ENCODE measurements at regions of chr5 and their contacts with region 1.

Region 1: DNA sequence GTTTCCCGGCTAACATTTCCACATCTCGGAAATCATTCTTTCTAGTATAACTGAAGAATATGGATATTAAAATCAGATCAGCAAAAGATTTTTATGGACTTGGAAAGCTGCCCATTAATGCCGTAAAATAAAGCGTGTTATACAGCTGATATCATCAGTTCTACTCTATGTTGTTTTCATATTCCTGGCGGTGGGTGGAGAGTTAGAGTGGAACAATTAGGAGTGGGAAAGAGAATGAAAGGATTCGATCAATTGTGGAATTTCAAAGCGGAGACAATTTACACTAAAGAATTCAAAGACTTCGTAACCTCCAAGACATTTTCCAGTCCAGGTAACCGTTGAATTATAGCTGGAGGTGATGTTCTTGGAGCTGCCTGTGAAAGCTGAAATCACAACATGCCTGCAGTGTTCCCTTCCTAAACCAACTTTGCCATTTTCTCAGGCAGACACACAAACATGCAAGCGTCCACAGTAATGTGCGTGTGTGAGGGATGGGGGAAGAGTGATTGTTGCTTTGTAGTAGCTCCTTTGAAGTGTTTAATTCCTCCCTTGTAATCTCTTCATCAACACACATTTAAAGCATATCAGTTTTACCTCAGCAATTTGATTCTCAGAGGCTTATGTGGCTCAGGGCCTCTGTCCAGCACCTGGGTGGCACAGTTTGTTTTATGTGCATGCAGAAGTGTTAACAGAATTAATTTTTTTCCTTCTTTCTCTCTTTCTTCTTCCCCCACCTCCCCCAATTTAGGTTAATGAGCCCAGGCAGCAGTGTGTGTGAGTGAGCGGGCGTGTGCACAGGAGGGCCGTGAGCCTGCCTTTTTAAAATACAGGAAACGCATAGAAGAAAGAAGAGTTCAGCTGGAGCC is 544.1 kb downstream of the RAB3C start:
- DNase-seq: peak; percentile 41
- H3K4me3 ChIP-seq: peak overlapping the region in 1 of 3 experiments; percentile 2
- H3K27ac ChIP-seq: peak overlapping the region; percentile 7
- H3K4me1 ChIP-seq: peaks cover 13% of the 10 kb centered on the region
- H3K27me3 ChIP-seq: peaks cover 0 to 5% of the 10 kb centered on the region in 2 experiments
- CTCF ChIP-seq: no peak
- POLR2A ChIP-seq: no peak

Region 2: DNA sequence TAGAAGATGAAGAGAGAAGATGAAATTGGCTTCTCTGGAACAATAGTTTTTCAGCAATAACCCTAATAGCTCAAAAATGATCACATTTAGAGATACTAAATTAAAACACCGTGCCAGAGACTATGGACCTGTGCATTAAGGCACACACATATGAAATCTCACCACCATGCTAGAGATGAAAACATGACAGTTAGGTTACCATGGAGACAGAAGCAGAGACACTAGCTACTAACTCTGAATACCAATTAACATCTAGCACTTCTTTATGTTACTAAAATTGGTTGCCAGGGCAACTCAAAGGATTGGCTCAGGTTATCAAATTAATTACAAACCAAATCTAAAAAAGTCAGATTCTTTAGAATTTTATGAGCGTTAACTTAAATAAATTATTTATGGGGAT is 1004.8 kb before region 1 on chr5:
- CTCF ChIA-PET with region 1: no interaction called
- POLR2A ChIA-PET with region 1: no interaction called
- dilution Hi-C with region 1: no loop called
- intact Hi-C with region 1: no loop called
- DNase-seq: no peak
- H3K4me3 ChIP-seq: no peak overlapping the region
- H3K27ac ChIP-seq: no peak overlapping the region
- H3K4me1 ChIP-seq: no peaks in the 10 kb centered on the region
- H3K27me3 ChIP-seq: no peaks in the 10 kb centered on the region
- CTCF ChIP-seq: no peak
- POLR2A ChIP-seq: no peak

Region 3: GRCh38 chr5:58666598-58667581 is 460.1 kb before region 1 on chr5:
- CTCF ChIA-PET with region 1: no interaction called
- POLR2A ChIA-PET with region 1: no interaction called
- dilution Hi-C with region 1: no loop called
- intact Hi-C with region 1: no loop called
- DNase-seq: peak; percentile 95
- H3K4me3 ChIP-seq: no peak overlapping the region
- H3K27ac ChIP-seq: peak overlapping the region; percentile 90
- H3K4me1 ChIP-seq: peaks cover 49% of the 10 kb centered on the region
- H3K27me3 ChIP-seq: no peaks in the 10 kb centered on the region
- CTCF ChIP-seq: no peak
- POLR2A ChIP-seq: peak; percentile 68

Region 4: DNA sequence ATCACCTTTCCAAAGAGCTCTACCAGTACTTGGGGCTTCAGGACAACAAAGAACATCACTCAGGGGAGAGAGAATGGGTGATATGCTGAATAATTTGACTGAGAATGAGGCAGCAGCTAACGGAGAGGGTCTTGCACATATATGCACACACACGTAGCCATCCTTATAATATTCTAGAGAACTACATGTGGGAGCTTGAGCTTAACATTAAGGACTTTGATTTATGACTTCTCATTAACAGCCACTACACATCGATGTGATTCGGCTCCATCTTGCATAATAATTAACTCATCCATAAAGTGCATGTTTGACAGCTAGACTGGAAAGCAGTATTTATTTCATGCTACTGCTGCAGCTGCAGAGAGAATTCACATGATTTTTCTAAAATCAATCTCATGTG is 380.6 kb before region 1 on chr5:
- CTCF ChIA-PET with region 1: no interaction called
- POLR2A ChIA-PET with region 1: no interaction called
- dilution Hi-C with region 1: no loop called
- intact Hi-C with region 1: no loop called
- DNase-seq: no peak
- H3K4me3 ChIP-seq: no peak overlapping the region
- H3K27ac ChIP-seq: no peak overlapping the region
- H3K4me1 ChIP-seq: no peaks in the 10 kb centered on the region
- H3K27me3 ChIP-seq: no peaks in the 10 kb centered on the region
- CTCF ChIP-seq: no peak
- POLR2A ChIP-seq: no peak

Region 5: GRCh38 chr5:59039296-59040023 is 87.5 kb before region 1 on chr5:
- CTCF ChIA-PET with region 1: interaction called, 4 read pairs
- POLR2A ChIA-PET with region 1: no interaction called
- dilution Hi-C with region 1: no loop called
- intact Hi-C with region 1: loop called (anchors 1 kb)
- DNase-seq: peak; percentile 77
- H3K4me3 ChIP-seq: peak overlapping the region; percentile 57 to 81 (median 60)
- H3K27ac ChIP-seq: peak overlapping the region; percentile 14
- H3K4me1 ChIP-seq: peaks cover 40% of the 10 kb centered on the region
- H3K27me3 ChIP-seq: no peaks in the 10 kb centered on the region
- CTCF ChIP-seq: no peak
- POLR2A ChIP-seq: no peak

Region 6: DNA sequence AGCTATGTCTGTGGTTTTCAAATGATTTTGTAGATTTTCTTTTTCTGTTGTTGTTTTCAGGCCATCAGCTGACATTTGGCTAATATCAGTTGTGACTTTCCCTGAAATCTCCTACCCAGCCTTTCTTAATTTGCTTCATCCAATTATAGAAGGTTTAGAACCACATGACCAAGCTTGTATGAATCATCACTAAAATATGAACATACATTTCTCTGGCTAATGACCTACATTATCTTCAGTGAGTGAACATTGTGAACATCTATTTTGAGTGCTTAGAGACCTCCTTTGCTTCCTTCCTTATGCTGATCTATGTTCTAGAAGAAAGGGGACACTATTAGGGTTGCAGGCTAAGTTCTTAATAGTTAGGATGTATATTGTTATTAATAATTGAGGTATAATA is 11.6 kb before region 1 on chr5:
- CTCF ChIA-PET with region 1: interaction called, 15 read pairs
- POLR2A ChIA-PET with region 1: no interaction called
- dilution Hi-C with region 1: no loop called
- intact Hi-C with region 1: no loop called
- DNase-seq: no peak
- H3K4me3 ChIP-seq: no peak overlapping the region
- H3K27ac ChIP-seq: no peak overlapping the region
- H3K4me1 ChIP-seq: peaks cover 2% of the 10 kb centered on the region
- H3K27me3 ChIP-seq: no peaks in the 10 kb centered on the region
- CTCF ChIP-seq: no peak
- POLR2A ChIP-seq: no peak

Region 7: GRCh38 chr5:59152701-59153245 is 25.8 kb after region 1 on chr5:
- CTCF ChIA-PET with region 1: no interaction called
- POLR2A ChIA-PET with region 1: no interaction called
- dilution Hi-C with region 1: no loop called
- intact Hi-C with region 1: no loop called
- DNase-seq: no peak
- H3K4me3 ChIP-seq: no peak overlapping the region
- H3K27ac ChIP-seq: no peak overlapping the region
- H3K4me1 ChIP-seq: no peaks in the 10 kb centered on the region
- H3K27me3 ChIP-seq: no peaks in the 10 kb centered on the region
- CTCF ChIP-seq: no peak
- POLR2A ChIP-seq: no peak

Measured in endothelial cell of umbilical vein (primary cell).